ENCODE measurements at regions of chr2 and their contacts with region 1.

Region 1: GRCh38 chr2:65320042-65320725 is 92.6 kb downstream of the ACTR2 start:
- DNase-seq: peak; percentile 89 to 91
- ATAC-seq: peak; percentile 94 to 96
- H3K4me3 ChIP-seq: peak overlapping the region; percentile 17; the same call in 1 of the 3 replicates
- H3K27ac ChIP-seq: peak overlapping the region; percentile 76 to 85
- H3K4me1 ChIP-seq: peaks cover 27% of the 10 kb centered on the region
- CTCF ChIP-seq: peak; percentile 52; the same call in 2 of the 3 replicates
- EP300 ChIP-seq: no peak; a peak in 1 of 5 replicates
- POLR2A ChIP-seq: no peak
- RAD21 ChIP-seq: peak; percentile 33 to 49; a peak in 4 of 5 replicates

Region 2: GRCh38 chr2:65300761-65301711 is 19.1 kb before region 1 on chr2:
- CTCF ChIA-PET with region 1: interaction called, 34 read pairs
- POLR2A ChIA-PET with region 1: interaction called, 13 read pairs
- DNase-seq: peak; percentile 65 to 70
- ATAC-seq: peak; percentile 86 to 90
- H3K4me3 ChIP-seq: no peak overlapping the region
- H3K27ac ChIP-seq: peak overlapping the region; percentile 71 to 82
- H3K4me1 ChIP-seq: peaks cover 38% of the 10 kb centered on the region
- CTCF ChIP-seq: no peak
- EP300 ChIP-seq: no peak
- POLR2A ChIP-seq: no peak
- RAD21 ChIP-seq: 0 out of 5 replicates have a peak, but pooled peaks of 1 of the 2 experiments have one; percentile 20

Measured in A549 (cell line).